ENCODE measurements at regions of chr11 and their contacts with region 1.

Region 1: DNA sequence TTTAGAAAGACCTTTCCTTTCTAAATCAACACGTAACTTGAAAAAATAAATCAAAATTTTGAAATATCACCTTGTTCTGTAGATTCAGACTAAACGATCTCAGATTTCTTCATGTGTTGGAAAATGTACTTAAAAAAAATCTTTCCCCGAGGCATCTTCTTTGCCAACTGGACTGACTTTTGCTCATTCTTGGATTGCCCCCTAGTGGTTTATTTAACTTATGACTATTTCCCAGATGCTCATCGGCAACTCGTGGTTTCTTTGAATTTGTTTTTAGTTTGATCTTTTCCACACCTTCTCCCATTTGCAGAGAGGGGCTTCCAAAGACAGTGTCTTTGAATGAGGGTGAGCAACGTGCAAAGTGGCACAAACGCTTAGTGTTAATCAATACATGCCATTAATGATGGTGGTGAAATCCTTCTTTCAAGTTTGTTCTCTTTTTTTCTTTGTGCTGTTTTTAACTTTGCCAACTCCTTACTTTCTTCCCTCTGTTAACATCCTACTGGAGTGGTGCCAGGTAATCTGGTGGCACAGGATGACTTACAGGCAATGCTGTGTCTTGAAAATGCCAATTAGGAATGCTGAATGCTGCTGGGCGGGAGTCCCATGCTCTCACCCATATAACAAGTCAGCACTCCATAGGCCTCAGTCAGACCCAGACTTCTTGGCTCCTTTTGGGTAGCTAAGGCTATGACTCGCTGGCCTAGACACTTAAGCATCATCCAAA is 18.3 kb downstream of the PRSS23 start:
- DNase-seq: peak; percentile 58

Region 2: DNA sequence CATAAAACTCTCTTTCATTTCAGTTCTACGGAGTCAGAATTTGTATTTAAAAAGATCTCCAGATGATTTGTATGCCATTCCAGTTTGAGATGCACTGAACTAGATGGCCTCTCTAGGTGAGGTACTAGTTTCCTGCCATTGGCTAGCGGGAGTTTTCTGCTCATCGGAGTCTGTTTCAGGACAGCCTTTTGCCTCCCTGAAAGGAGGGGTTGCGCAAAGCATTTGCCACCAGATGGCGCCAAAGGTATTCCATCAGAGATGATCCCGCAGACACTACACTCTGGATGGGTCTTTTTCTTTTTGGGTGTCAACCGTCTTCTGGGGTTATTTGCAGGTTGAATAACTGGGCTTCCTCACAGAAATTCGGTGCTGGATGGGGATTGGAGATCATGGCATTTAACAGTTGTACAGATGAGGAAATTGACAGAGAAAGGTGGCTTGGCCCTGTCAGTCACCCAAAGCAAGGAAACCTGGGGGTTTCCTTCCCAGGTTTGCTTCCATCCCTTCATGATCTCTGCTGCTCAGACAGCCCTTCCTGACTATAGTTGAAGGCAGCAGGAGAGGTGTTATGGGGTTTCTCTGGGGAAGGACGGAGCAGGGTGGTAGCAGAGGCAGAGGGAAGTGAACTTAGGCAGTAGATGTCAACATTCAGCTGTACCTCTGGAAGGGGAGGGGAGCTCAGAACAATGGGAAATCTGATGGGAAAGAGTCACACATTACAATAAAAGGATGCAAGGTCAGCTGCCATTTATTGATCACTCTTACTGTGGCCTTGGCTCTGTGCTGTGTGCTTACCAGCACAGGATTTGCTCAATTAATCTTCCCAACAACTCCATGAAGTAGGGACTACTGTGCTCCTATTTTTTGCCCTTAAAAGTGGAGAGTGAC is 362.3 kb before region 1 on chr11:
- in situ Hi-C with region 1: loop called (anchors 25 kb)
- DNase-seq: peak; percentile 76

Region 3: GRCh38 chr11:86688398-86689179 is 130.0 kb before region 1 on chr11:
- in situ Hi-C with region 1: no loop called
- DNase-seq: no peak

Region 4: DNA sequence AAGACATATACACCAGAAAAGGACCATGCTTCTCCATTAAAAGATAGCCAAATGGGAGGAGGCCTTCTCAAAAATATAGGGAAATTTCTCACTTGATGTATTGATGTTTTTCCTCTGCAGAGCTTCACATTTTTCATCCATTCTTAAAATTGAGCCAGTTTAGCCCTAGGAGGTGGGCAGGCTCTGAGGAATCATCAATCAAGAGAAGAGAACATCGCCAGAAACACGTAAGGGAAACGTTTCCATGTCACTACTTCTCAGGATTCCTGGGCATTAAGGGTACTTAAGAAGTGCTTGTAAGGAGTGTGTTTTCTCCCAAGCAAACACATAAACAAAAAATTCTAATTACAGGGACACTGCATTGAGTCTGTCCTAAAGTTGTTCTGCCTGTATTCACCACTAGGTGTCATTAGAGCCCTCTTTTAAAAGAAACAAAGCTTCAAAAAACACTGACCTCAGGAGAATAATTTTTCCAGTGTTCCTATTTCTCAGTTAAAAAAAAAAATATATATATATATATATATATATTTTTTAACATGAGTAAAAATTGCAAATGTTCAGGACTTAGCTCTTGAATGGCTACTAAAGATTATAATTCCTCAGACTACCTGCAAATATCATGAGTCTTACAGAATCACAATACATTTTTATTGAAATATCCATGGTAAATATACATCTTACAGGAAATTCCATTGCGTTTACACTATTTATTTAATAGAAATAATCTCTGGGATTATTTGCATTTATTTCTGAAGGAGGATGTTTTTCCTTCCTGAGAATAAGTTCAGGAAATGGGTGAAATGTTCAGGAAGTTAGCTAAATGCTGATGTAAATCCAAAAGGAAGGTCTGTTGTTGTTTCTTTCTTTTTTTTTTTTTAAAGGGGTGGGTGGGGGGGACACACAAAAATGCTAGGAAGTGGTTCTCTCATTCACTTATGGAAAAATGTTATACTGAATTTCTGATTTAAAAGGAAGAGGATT is 120.6 kb after region 1 on chr11:
- in situ Hi-C with region 1: no loop called
- DNase-seq: peak; percentile 68